PC-9 (cell line): ENCODE measurements at regions of chr4 and their contacts with region 1.

Region 1: DNA sequence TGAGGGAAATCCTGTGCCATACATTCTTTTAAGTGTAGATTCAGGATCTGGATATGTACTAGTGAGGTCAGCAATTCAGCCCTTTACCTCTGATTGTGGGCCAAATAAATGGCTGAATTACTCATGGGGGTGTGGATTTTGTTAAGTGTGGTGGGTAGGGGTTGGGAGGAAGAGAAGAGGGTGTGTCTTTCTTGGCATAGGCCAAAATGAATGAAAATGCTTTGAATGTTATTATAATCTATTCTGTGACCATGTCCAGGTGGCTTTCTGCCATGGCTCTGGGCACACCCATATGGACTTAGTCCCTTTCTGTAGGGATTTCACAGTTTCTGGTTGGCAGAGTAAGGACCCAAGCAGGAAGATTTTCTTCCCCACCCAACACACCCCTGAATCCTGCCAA is 244.3 kb downstream of the CBR4 start:
- DNase-seq: peak in 1 of 2 experiments; percentile 73
- H3K4me3 ChIP-seq: no peak overlapping the region
- H3K27ac ChIP-seq: no peak overlapping the region
- H3K4me1 ChIP-seq: no peaks in the 10 kb centered on the region
- H3K27me3 ChIP-seq: no peaks in the 10 kb centered on the region
- CTCF ChIP-seq: no peak

Region 2: DNA sequence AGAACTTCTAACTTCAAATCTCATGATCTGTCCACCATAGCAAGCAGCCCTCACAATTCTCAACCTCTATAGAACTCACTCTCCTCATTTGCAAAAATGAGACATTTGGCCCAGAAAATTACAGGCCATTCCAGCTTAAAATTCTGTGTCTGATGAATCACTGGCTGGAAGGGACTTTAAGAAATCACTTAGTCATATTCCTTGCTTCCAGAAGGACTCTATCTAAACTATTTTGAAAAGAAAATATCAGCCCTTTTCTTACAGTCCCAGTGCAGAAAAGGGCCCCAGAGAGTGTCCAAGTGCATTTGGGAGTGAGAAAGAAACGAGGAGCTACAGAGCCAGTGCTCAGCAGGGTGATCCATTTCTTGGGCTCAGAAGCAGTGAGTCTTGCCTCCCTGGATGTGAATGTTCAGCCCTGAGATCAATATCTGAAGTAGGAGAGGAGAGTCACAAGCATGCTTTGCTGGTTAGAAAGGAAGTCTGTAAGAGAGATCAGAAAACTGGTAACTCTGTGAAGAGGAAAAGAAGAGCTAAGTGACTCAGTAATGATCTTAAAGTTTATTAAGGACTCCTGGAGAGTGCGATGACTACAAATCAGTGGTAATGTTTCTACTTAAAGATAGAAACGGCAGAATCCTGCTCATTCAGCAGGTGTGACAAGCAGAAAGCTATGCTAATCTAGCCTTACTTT is 129.1 kb before region 1 on chr4:
- CTCF ChIA-PET with region 1: no interaction called
- POLR2A ChIA-PET with region 1: no interaction called
- intact Hi-C with region 1: no loop called
- DNase-seq: peak in 1 of 2 experiments; percentile 61
- H3K4me3 ChIP-seq: peak overlapping the region; percentile 34; the same call in 1 of the 2 replicates
- H3K27ac ChIP-seq: peak overlapping the region; percentile 92
- H3K4me1 ChIP-seq: peaks cover 59% of the 10 kb centered on the region
- H3K27me3 ChIP-seq: no peaks in the 10 kb centered on the region
- CTCF ChIP-seq: no peak

Region 3: GRCh38 chr4:168790898-168791297 is 25.2 kb after region 1 on chr4:
- CTCF ChIA-PET with region 1: no interaction called
- POLR2A ChIA-PET with region 1: no interaction called
- intact Hi-C with region 1: loop called (anchors 1 kb)
- DNase-seq: no peak
- H3K4me3 ChIP-seq: no peak overlapping the region
- H3K27ac ChIP-seq: no peak overlapping the region
- H3K4me1 ChIP-seq: peaks cover 3% of the 10 kb centered on the region
- H3K27me3 ChIP-seq: no peaks in the 10 kb centered on the region
- CTCF ChIP-seq: no peak

Region 4: GRCh38 chr4:168803732-168804131 is 38.0 kb after region 1 on chr4:
- CTCF ChIA-PET with region 1: no interaction called
- POLR2A ChIA-PET with region 1: no interaction called
- intact Hi-C with region 1: no loop called
- DNase-seq: no peak
- H3K4me3 ChIP-seq: no peak overlapping the region
- H3K27ac ChIP-seq: no peak overlapping the region
- H3K4me1 ChIP-seq: no peaks in the 10 kb centered on the region
- H3K27me3 ChIP-seq: no peaks in the 10 kb centered on the region
- CTCF ChIP-seq: no peak